ENCODE measurements at regions of chr17 and their contacts with region 1.

Region 1: DNA sequence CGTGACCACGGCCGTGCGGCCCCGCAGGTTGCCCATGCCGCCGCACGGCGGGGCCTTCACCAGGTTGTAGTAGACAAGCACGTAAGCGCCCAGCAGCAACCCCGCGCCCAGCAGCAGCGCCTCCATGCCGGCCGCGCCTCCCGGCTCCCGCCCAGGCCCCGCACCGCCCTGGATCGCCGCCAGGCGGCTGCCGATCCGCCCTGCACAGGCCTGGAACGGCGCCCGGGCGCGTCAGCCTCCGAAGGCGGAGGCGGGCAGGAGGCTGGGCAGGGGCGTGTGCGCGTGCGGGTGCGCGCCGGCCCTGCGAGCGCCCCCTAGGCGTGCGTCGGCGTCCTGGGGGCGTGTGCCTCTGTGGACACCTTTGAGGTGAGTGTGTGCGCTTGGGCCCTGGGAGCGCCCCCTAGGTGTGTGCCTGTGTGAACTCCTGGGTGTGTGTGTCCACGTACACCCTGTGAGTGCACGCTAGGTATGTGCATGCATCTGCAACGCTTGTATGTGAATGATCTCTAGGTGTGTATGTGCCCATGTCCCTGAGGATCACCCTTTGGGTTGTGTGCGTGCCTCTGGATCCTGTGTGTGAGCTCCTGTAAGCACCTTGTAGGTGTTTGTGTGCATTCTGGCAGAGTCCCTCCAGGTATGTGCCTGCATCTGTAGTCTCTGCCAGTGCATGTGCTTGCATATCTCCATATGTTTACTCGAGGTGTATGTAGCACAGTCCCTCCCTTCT is at the start of gene DHRS13:
- H3K4me3 ChIP-seq: peak within 1 kb of the TSS; percentile 65
- H3K27ac ChIP-seq: peak within 1 kb of the TSS; percentile 77
- H3K4me1 ChIP-seq: peaks cover 1% of the 10 kb centered on the region; the same call in 1 of the 2 replicates
- CTCF ChIP-seq: peak; percentile 99

Region 2: GRCh38 chr17:28750178-28751047 is 152.6 kb before region 1 on chr17:
- CTCF ChIA-PET with region 1: interaction called, 12 read pairs
- POLR2A ChIA-PET with region 1: interaction called, 7 read pairs
- H3K4me3 ChIP-seq: no peak overlapping the region
- H3K27ac ChIP-seq: 0 out of 2 replicates have a peak overlapping the region, but pooled peaks have one; percentile 12
- H3K4me1 ChIP-seq: peaks cover 8% of the 10 kb centered on the region; the same call in 1 of the 2 replicates
- CTCF ChIP-seq: peak; percentile 96

Region 3: GRCh38 chr17:28878981-28879380 is 24.0 kb before region 1 on chr17:
- CTCF ChIA-PET with region 1: interaction called, 11 read pairs
- POLR2A ChIA-PET with region 1: no interaction called
- H3K4me3 ChIP-seq: no peak overlapping the region
- H3K27ac ChIP-seq: no peak overlapping the region
- H3K4me1 ChIP-seq: no peaks in the 10 kb centered on the region
- CTCF ChIP-seq: peak; percentile 65

Region 4: DNA sequence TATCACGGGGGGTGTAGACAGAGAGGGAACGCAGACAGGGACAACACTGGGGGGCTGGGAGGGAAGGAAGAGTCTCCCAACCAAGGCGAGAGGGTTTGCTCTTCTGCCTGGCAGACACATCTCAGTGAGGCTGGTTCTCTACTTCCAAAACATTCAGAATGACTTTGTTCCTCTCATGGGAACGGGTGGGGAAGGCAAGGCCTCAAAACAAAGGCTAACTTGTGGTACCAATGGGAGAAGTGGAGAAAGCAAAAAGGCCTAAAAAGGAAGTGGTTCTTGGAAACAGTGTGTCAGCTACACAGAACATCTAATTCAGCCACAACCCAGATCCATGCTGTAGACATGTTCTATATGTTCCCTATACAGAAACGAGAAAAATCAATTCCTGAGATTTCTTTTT is 13.0 kb before region 1 on chr17:
- CTCF ChIA-PET with region 1: interaction called, 22 read pairs
- POLR2A ChIA-PET with region 1: interaction called, 3 read pairs
- H3K4me3 ChIP-seq: no peak overlapping the region
- H3K27ac ChIP-seq: no peak overlapping the region
- H3K4me1 ChIP-seq: no peaks in the 10 kb centered on the region; the same call in 1 of the 2 replicates
- CTCF ChIP-seq: no peak

Region 5: GRCh38 chr17:28916302-28916934 is 13.4 kb after region 1 on chr17:
- CTCF ChIA-PET with region 1: interaction called, 22 read pairs
- POLR2A ChIA-PET with region 1: interaction called, 6 read pairs
- H3K4me3 ChIP-seq: no peak overlapping the region
- H3K27ac ChIP-seq: no peak overlapping the region
- H3K4me1 ChIP-seq: no peaks in the 10 kb centered on the region
- CTCF ChIP-seq: peak; percentile 58; the same call in 1 of the 2 replicates

Measured in HEK293 (cell line).